ENCODE measurements at regions of chr7 and their contacts with region 1.

Region 1: GRCh38 chr7:816300-816750 is 16.0 kb upstream of the SUN1 start:
- DNase-seq: peak; percentile 92 to 99 (median 96)
- H3K4me3 ChIP-seq: peak overlapping the region in 58 of 59 donors; percentile 19 to 94 (median 75)
- H3K27ac ChIP-seq: peak overlapping the region in 35 of 59 donors; percentile 27 to 97 (median 78)
- H3K27me3 ChIP-seq: no peaks in the 10 kb centered on the region
- CTCF ChIP-seq: no peak

Region 2: DNA sequence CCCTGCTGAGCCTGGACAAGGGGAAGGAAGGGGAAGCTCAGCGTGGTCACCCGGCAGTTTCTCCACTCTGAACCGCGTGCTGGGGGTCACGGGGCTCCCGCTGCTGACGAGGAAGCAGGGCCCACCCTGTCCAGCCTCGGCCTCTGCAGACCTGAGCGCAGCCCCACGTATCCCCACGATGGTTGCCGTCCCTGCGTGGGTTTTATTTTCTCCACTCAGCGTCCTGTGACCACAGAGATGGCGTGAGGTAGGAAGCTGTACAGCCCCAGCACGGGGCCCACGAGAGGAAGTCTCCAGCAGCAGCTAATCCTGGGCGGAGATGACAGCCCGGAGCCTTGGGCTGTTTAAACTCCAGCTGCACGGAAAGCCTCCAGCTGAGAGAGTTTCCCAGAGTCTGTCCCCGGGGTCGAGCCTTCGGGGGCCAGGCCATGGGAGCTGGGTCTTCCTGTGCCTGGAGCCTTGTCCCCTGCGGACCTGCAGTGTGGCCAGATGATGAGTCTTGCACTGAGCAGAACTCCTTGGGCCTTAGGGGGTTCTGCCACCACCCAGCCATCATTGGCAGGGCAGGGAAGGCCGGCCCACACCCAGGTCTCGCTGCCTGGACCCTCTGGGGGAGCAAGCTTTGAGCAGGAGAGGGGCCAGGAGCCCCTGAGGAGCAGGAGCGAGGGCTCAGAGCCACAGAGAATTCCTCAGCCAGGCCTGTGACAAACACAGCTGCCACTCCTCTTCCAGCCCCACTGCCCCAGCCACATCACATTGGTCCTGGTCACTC is 696.7 kb before region 1 on chr7:
- intact Hi-C with region 1: no loop called
- DNase-seq: peak in 1 of 10 donors; percentile 32
- H3K4me3 ChIP-seq: peak overlapping the region in 2 of 59 donors; percentile 3 to 12
- H3K27ac ChIP-seq: peak overlapping the region in 34 of 59 donors; percentile 5 to 77 (median 42)
- H3K27me3 ChIP-seq: peaks cover 0 to 4% (median 0%) of the 10 kb centered on the region in 45 donors
- CTCF ChIP-seq: no peak

Region 3: GRCh38 chr7:883055-884021 is 67.0 kb after region 1 on chr7:
- intact Hi-C with region 1: no loop called
- DNase-seq: peak in 5 of 10 donors; percentile 38 to 53 (median 48)
- H3K4me3 ChIP-seq: peak overlapping the region in 2 of 59 donors; percentile 3 to 9
- H3K27ac ChIP-seq: peak overlapping the region in 52 of 59 donors; percentile 2 to 84 (median 51)
- H3K27me3 ChIP-seq: no peaks in the 10 kb centered on the region
- CTCF ChIP-seq: peak in 24 of 56 donors; percentile 11 to 50 (median 27)

Region 4: DNA sequence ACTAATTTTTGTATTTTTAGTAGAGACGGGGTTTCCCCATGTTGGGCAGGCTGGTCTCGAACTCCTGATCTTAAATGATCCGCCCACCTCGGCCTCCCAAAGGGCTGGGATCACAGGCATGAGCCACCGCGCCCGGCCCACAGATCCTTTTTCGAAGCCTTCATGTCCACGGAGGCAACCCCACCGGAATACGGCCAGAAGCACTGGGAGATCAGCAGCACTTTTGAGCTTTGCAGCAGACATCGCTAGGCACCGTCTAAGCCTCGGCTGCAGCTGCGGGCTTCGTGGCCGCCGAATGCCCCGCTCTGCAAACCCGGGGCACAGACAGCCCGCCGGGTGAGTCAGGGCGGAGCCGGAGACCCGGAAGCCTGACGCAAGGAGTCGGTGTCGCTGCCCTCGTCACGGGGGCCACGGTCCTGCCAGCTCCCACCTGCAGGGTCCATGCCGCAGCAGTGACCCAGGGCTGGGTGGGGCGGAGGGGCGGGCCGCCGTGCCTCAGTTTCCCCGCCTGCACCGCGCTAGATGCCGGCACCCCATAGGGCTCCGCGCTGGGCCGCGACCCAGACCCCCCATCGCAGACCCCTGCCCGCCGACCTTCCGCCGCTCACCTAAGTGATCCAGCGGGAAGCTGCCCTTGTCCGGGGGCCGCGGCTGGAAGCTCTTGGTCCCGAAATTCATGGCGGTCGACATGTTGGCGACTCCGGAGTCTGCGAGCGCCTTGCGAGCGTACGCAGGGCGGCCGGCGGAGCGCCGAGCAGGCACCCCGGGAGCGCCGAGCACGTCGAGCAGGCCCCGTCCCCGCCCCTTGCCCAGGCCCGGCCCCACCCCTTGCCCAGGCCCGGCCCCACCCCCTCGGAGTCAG is 158.7 kb after region 1 on chr7 and contains the start of gene COX19:
- intact Hi-C with region 1: loop called in 1 of 2 experiments (anchors 10 kb)
- DNase-seq: peak; percentile 70 to 95 (median 82)
- H3K4me3 ChIP-seq: peak within 1 kb of the TSS; percentile 61 to 100 (median 98)
- H3K27ac ChIP-seq: peak within 1 kb of the TSS in 58 of 59 donors; percentile 21 to 98 (median 89)
- H3K27me3 ChIP-seq: no peaks in the 10 kb centered on the region
- CTCF ChIP-seq: peak in 24 of 56 donors; percentile 11 to 51 (median 27)
- total RNA-seq, gene COX19: 11.2 to 38.9 (median 18.5) TPM